CD4-positive, alpha-beta memory T cell (primary cell): ENCODE measurements at regions of chr1 and their contacts with region 1.

Region 1: GRCh38 chr1:35192853-35193664 is at the start of gene SFPQ:
- DNase-seq: peak; percentile 97 to 99 (median 98)
- H3K4me3 ChIP-seq: peak within 1 kb of the TSS; percentile 43 to 61
- H3K4me3 Mint-ChIP-seq: peak within 1 kb of the TSS; percentile 87 to 98 (median 96)
- H3K27ac ChIP-seq: peak within 1 kb of the TSS; percentile 91
- H3K27ac Mint-ChIP-seq: peak within 1 kb of the TSS; percentile 96 to 100 (median 99)
- H3K4me1 ChIP-seq: peaks cover 39% of the 10 kb centered on the region
- H3K4me1 Mint-ChIP-seq: peaks cover 33 to 58% (median 42%) of the 10 kb centered on the region in 4 donors
- H3K27me3 ChIP-seq: no peaks in the 10 kb centered on the region
- H3K27me3 Mint-ChIP-seq: no peaks in the 10 kb centered on the region
- total RNA-seq, gene SFPQ: 321 to 334 TPM

Region 2: GRCh38 chr1:34865981-34866761 is 326.9 kb before region 1 on chr1:
- CTCF ChIA-PET with region 1: no interaction called
- POLR2A ChIA-PET with region 1: interaction called, 3 read pairs
- intact Hi-C with region 1: loop called (anchors 5 kb)
- DNase-seq: peak; percentile 85 to 92 (median 91)
- H3K4me3 ChIP-seq: peak overlapping the region; percentile 61 to 69
- H3K4me3 Mint-ChIP-seq: peak overlapping the region; percentile 85 to 92 (median 88)
- H3K27ac ChIP-seq: peak overlapping the region; percentile 74
- H3K27ac Mint-ChIP-seq: peak overlapping the region; percentile 86 to 95 (median 92)
- H3K4me1 ChIP-seq: peaks cover 36% of the 10 kb centered on the region
- H3K4me1 Mint-ChIP-seq: peaks cover 20 to 56% (median 34%) of the 10 kb centered on the region in 4 donors
- H3K27me3 ChIP-seq: no peaks in the 10 kb centered on the region
- H3K27me3 Mint-ChIP-seq: peaks cover 1 to 3% of the 10 kb centered on the region in 2 donors

Region 3: GRCh38 chr1:35030756-35031446 is 162.2 kb before region 1 on chr1:
- CTCF ChIA-PET with region 1: no interaction called
- POLR2A ChIA-PET with region 1: interaction called, 6 read pairs
- intact Hi-C with region 1: loop called (anchors 5 kb)
- DNase-seq: peak in 2 of 5 donors; percentile 3 to 59
- H3K4me3 ChIP-seq: peak overlapping the region; percentile 77 to 84
- H3K4me3 Mint-ChIP-seq: peak overlapping the region; percentile 97 to 100 (median 99)
- H3K27ac ChIP-seq: peak overlapping the region; percentile 82
- H3K27ac Mint-ChIP-seq: peak overlapping the region; percentile 93 to 100 (median 99)
- H3K4me1 ChIP-seq: peaks cover 31% of the 10 kb centered on the region
- H3K4me1 Mint-ChIP-seq: peaks cover 28 to 50% (median 41%) of the 10 kb centered on the region in 4 donors
- H3K27me3 ChIP-seq: no peaks in the 10 kb centered on the region
- H3K27me3 Mint-ChIP-seq: no peaks in the 10 kb centered on the region

Region 4: DNA sequence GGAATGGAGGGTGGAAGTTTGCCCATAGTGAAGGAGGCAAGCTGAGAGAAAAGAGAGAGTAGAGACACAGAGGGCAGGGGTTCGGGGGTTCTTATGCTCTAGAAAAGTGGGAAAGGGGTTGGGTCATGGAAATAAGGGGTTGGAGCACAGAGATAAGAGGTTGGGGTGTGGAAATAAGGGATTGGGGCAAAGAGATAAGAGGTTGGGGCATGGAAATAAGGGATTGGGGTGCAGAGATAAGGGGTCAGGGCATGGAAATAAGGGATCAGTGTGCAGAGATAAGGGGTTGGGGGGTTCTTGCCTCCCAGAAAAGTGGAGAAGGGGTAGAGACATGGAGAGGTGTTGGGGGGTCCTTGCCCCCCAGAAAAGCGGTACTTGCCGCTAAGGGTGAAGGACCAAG is 56.3 kb before region 1 on chr1:
- CTCF ChIA-PET with region 1: no interaction called
- POLR2A ChIA-PET with region 1: no interaction called
- intact Hi-C with region 1: no loop called
- DNase-seq: no peak
- H3K4me3 ChIP-seq: no peak overlapping the region
- H3K4me3 Mint-ChIP-seq: no peak overlapping the region
- H3K27ac ChIP-seq: no peak overlapping the region
- H3K27ac Mint-ChIP-seq: no peak overlapping the region
- H3K4me1 ChIP-seq: no peaks in the 10 kb centered on the region
- H3K4me1 Mint-ChIP-seq: no peaks in the 10 kb centered on the region
- H3K27me3 ChIP-seq: no peaks in the 10 kb centered on the region
- H3K27me3 Mint-ChIP-seq: peaks cover 0 to 2% of the 10 kb centered on the region in 2 donors

Region 5: GRCh38 chr1:35287807-35288640 is 95.0 kb after region 1 on chr1:
- CTCF ChIA-PET with region 1: no interaction called
- POLR2A ChIA-PET with region 1: interaction called, 5 read pairs
- intact Hi-C with region 1: loop called (anchors 5 kb)
- DNase-seq: no peak
- H3K4me3 ChIP-seq: no peak overlapping the region
- H3K4me3 Mint-ChIP-seq: no peak overlapping the region
- H3K27ac ChIP-seq: no peak overlapping the region
- H3K27ac Mint-ChIP-seq: peak overlapping the region in 1 of 7 donors; percentile 19
- H3K4me1 ChIP-seq: peaks cover 28% of the 10 kb centered on the region
- H3K4me1 Mint-ChIP-seq: peaks cover 28 to 50% (median 39%) of the 10 kb centered on the region in 4 donors
- H3K27me3 ChIP-seq: no peaks in the 10 kb centered on the region
- H3K27me3 Mint-ChIP-seq: no peaks in the 10 kb centered on the region

Region 6: GRCh38 chr1:35930593-35931445 is 737.8 kb after region 1 on chr1 and contains the start of gene AGO3:
- CTCF ChIA-PET with region 1: no interaction called
- POLR2A ChIA-PET with region 1: interaction called, 4 read pairs
- intact Hi-C with region 1: loop called (anchors 10 kb)
- DNase-seq: peak; percentile 87 to 92 (median 89)
- H3K4me3 ChIP-seq: peak within 1 kb of the TSS; percentile 71 to 72
- H3K4me3 Mint-ChIP-seq: peak within 1 kb of the TSS; percentile 92 to 97 (median 94)
- H3K27ac ChIP-seq: peak within 1 kb of the TSS; percentile 92
- H3K27ac Mint-ChIP-seq: peak within 1 kb of the TSS; percentile 97 to 99 (median 98)
- H3K4me1 ChIP-seq: peaks cover 26% of the 10 kb centered on the region
- H3K4me1 Mint-ChIP-seq: peaks cover 22 to 37% (median 28%) of the 10 kb centered on the region in 4 donors
- H3K27me3 ChIP-seq: no peaks in the 10 kb centered on the region
- H3K27me3 Mint-ChIP-seq: no peaks in the 10 kb centered on the region
- total RNA-seq, gene AGO3: 45.6 to 47.3 TPM